ENCODE measurements at regions of chr2 and their contacts with region 1.

Region 1: GRCh38 chr2:160109936-160110673 is 47.7 kb upstream of the PLA2R1 start:
- H3K4me3 ChIP-seq: no peak overlapping the region
- H3K27ac ChIP-seq: no peak overlapping the region
- H3K4me1 ChIP-seq: no peaks in the 10 kb centered on the region
- CTCF ChIP-seq: peak; percentile 54

Region 2: DNA sequence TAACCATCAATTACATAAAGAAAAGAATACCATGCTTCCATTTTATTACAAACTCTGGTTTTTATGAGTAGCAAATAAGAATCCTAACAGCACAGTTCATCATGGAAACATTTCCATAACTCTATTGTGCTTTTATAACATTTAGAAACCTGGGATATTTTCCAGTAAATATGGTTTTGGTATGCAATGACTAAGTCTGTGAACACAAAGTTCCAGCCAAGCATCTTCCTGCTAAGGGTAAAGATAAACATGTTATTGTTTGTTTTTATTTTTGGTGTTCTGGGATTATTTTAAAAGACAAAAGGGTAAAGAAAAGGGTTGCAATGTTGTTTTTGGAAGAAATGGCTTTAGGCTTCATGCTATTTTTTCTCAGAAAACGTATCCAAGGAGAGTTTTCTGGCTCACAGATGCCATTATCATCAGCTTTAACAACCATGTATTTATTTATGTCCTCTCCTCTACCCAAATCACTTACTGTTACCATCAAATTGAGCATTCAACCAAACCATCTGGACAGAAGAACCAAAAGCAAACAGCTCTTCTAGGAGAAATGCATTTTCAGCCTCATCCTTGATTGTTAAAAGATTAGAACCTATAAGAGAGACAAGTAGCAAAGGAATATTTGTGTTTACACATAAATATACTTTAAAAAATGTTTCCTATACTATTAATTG is 163.6 kb before region 1 on chr2:
- CTCF ChIA-PET with region 1: no interaction called
- POLR2A ChIA-PET with region 1: no interaction called
- H3K4me3 ChIP-seq: no peak overlapping the region
- H3K27ac ChIP-seq: no peak overlapping the region
- H3K4me1 ChIP-seq: no peaks in the 10 kb centered on the region
- CTCF ChIP-seq: no peak

Region 3: DNA sequence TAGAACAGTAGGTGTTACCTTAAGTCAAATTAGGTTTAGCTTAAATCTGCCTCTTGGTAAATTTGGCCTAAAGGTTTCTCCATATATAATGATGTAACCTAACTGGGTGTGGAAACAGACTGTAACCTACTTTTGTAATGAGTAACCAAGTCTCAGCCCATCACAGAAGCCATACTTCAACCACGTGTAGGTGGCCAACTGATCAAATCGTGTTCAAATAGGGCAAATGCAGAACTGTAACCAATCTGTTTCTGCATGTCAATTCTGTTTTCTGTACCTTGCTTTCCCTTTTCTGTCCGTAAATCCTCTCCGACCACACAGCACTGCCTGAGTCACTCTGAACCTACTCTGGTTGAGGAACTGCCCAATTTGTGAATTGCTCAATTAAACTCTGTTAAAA is 13.7 kb before region 1 on chr2:
- CTCF ChIA-PET with region 1: interaction called, 17 read pairs
- POLR2A ChIA-PET with region 1: no interaction called
- H3K4me3 ChIP-seq: no peak overlapping the region
- H3K27ac ChIP-seq: no peak overlapping the region
- H3K4me1 ChIP-seq: no peaks in the 10 kb centered on the region
- CTCF ChIP-seq: no peak

Region 4: GRCh38 chr2:160210599-160211138 is 100.6 kb after region 1 on chr2:
- CTCF ChIA-PET with region 1: interaction called, 26 read pairs
- POLR2A ChIA-PET with region 1: no interaction called
- H3K4me3 ChIP-seq: no peak overlapping the region
- H3K27ac ChIP-seq: no peak overlapping the region
- H3K4me1 ChIP-seq: no peaks in the 10 kb centered on the region
- CTCF ChIP-seq: peak; percentile 66

Region 5: GRCh38 chr2:160379427-160379826 is 269.3 kb after region 1 on chr2:
- CTCF ChIA-PET with region 1: no interaction called
- POLR2A ChIA-PET with region 1: no interaction called
- H3K4me3 ChIP-seq: no peak overlapping the region
- H3K27ac ChIP-seq: no peak overlapping the region
- H3K4me1 ChIP-seq: peaks cover 25% of the 10 kb centered on the region
- CTCF ChIP-seq: no peak

Region 6: DNA sequence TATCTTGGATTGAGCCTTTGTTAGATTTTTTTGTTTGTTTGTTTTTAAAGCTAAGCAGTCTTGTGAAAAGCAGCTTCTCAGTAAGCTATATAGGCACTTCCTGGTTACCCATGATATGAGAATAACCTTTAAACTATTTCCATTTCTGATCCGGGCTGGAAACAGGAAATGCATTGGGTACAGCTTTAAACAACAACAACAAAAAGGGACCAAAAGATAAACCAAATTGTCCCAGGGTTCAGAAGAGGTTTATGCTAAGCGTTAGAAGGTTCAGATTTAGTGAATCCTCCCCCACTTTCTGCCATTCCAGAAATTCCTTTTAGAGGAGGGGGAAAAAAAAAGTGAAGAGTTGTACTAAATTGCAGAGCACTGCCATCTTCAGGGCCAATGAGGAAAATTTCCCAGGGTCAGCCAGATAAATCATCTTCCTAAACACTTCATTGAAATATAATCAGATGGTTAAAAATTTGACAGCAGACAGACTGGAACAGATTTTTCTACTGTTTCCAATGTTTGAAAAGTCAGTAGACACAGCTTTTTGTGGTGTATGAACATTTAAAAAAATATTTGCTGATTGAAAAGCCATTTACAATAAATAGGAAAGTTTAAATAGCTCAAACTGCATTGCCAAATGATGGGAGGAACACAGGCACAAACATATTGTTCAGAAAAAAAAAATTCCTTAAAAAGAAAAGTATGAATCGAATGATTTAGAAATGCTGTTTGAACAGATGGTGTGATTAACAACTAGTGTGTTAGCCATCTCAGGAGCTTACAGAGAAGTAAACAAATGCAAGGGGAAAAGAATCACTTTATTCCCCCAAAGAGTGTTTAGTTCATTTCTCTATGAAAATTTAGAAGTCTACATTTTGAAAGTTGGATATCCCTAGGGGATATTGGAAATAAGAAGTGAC is 860.2 kb after region 1 on chr2:
- CTCF ChIA-PET with region 1: interaction called, 13 read pairs
- POLR2A ChIA-PET with region 1: no interaction called
- H3K4me3 ChIP-seq: no peak overlapping the region
- H3K27ac ChIP-seq: no peak overlapping the region
- H3K4me1 ChIP-seq: no peaks in the 10 kb centered on the region
- CTCF ChIP-seq: peak; percentile 53; the same call in 1 of the 2 replicates

Region 7: GRCh38 chr2:161004379-161004778 is 894.3 kb after region 1 on chr2:
- CTCF ChIA-PET with region 1: interaction called, 15 read pairs
- POLR2A ChIA-PET with region 1: no interaction called
- H3K4me3 ChIP-seq: no peak overlapping the region
- H3K27ac ChIP-seq: no peak overlapping the region
- H3K4me1 ChIP-seq: no peaks in the 10 kb centered on the region
- CTCF ChIP-seq: no peak